Ascending aorta (tissue), 2 donors: ENCODE measurements at regions of chr18 and their contacts with region 1.

Region 1: DNA sequence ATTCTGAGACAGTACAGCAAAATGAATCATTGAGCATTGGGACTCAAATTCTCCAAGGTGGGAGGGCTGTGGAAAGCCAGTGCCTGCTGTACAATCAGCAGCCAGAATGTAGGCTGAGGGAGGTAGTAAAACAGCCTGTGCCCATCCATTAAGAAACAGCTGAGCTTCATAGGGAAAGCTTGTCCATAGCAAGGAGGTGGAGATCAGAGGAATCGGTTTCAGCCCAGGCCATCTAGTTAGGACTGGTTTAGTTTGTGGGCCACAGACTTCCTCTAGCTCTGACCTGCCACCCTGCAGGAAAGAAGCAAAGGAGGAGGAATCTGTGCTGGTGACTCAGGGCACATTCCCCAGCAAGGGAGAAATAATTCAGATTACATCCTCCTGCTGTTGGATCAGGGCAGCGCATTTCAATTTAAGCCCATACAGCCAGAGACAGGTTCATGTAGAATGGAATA is 333.4 kb downstream of the SETBP1 start:
- DNase-seq: peak in 1 of 2 donors; percentile 69
- H3K4me3 ChIP-seq: no peak overlapping the region
- H3K27ac ChIP-seq: peak overlapping the region; percentile 59 to 61
- H3K4me1 ChIP-seq: peaks cover 3 to 34% of the 10 kb centered on the region in 2 donors
- H3K27me3 ChIP-seq: no peaks in the 10 kb centered on the region
- CTCF ChIP-seq: peak in 2 of 3 experiments; percentile 18 to 19

Region 2: DNA sequence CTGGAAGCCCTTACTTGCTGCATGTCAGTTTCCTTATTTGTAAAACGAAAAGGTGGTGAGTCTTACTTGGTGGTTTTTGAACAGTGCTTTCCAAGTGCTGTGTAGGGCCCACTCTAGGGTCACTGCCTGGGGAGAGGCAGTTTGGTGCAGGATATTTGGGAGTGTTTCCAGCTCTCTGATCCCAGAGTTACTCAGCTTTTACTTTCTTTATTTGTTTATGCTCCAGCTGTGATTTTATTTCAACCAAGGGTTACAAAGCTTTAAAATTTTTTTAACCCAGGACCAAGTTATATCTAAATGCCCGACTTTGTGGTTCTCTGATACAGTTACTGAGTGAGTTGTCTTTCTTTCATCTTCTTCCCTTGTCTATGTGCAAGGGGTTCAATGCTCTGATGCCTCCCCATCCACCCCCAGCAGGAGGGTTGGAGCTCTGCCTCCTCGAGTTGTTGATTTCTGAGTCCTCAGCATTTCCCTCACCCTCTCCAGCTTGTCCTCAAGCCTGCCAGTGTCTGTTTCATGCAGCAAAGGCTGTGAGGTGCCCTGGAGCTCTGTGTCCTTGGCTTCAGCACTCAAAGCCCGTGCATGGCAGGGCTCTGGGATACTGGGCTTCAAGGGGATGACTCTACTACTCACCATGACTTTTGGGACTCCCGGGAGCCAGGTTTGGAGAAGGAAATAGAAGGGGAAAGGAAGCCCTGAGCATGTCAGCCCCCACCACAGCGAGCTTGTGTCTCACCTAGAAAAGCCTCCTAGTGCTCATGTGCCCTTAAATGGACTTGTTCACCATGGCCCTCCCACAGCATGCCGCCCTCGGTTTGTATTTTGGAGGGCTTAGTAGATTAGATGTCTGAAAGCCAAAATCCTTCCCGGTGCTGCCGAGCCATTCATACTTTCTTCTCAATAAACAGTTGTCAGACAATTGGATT is 96.6 kb before region 1 on chr18:
- intact Hi-C with region 1: loop called (anchors 5 kb)
- DNase-seq: no peak
- H3K4me3 ChIP-seq: no peak overlapping the region
- H3K27ac ChIP-seq: peak overlapping the region; percentile 81 to 89
- H3K4me1 ChIP-seq: peaks cover 13 to 26% of the 10 kb centered on the region in 2 donors
- H3K27me3 ChIP-seq: no peaks in the 10 kb centered on the region
- CTCF ChIP-seq: no peak

Region 3: GRCh38 chr18:45526114-45526841 is 512.2 kb after region 1 on chr18:
- intact Hi-C with region 1: loop called (anchors 10 kb)
- DNase-seq: no peak
- H3K4me3 ChIP-seq: no peak overlapping the region
- H3K27ac ChIP-seq: peak overlapping the region; percentile 16 to 53
- H3K4me1 ChIP-seq: peaks cover 10 to 28% of the 10 kb centered on the region in 2 donors
- H3K27me3 ChIP-seq: no peaks in the 10 kb centered on the region
- CTCF ChIP-seq: peak in 1 of 3 experiments; percentile 36